GM12878 (cell line): ENCODE measurements at regions of chr14 and their contacts with region 1.

Region 1: GRCh38 chr14:22472935-22473854 is 115.8 kb downstream of the DAD1 start:
- DNase-seq: no peak
- ATAC-seq: peak; percentile 67
- H3K4me3 ChIP-seq: no peak overlapping the region
- H3K27ac ChIP-seq: peak overlapping the region; percentile 49
- H3K4me1 ChIP-seq: peaks cover 50% of the 10 kb centered on the region
- H3K27me3 ChIP-seq: no peaks in the 10 kb centered on the region
- CTCF ChIP-seq: peak; percentile 59 to 72 (median 72)
- EP300 ChIP-seq: no peak
- POLR2A ChIP-seq: no peak
- RAD21 ChIP-seq: peak; percentile 96

Region 2: GRCh38 chr14:22200977-22201605 is 272.1 kb before region 1 on chr14:
- CTCF ChIA-PET with region 1: interaction called, 8 read pairs
- POLR2A ChIA-PET with region 1: no interaction called
- RAD21 ChIA-PET with region 1: interaction called, 10 read pairs
- SMC1A ChIA-PET with region 1: interaction called, 5 read pairs
- in situ Hi-C with region 1: no loop called
- intact Hi-C with region 1: no loop called
- DNase-seq: peak; percentile 3
- ATAC-seq: peak; percentile 93
- H3K4me3 ChIP-seq: no peak overlapping the region
- H3K27ac ChIP-seq: no peak overlapping the region
- H3K4me1 ChIP-seq: no peaks in the 10 kb centered on the region
- H3K27me3 ChIP-seq: no peaks in the 10 kb centered on the region; a peak in 1 of 4 replicates
- CTCF ChIP-seq: peak; percentile 64 to 72 (median 65); a peak in 5 of 6 replicates
- EP300 ChIP-seq: no peak
- POLR2A ChIP-seq: no peak
- RAD21 ChIP-seq: peak; percentile 64

Region 3: DNA sequence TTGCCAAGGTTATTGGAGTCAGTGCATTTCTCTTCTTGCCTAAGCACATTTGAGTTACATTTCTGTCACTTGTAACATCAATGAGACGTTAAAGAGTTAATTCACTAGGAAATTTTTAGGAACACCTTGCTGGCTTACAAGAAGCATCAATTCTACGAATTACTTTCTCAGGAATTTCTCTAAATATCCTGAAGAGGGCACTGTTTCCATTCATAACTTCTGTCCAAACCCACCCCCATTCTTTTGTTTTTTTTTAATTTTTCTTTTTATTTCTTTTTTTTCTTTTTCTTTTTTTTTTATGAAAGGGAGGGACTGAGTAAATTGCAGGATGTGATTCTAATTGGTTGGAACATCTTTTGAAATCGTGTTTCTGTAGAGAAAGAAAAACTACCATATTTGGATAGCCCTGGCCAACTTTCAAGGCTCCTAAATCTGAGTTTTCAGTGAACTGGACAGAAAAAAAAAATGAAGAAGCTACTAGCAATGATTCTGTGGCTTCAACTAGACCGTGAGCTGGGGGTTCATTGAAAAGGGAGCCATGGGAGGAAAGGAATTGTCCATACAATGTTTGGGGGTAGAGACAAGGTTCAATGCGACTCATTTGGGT is 169.5 kb before region 1 on chr14:
- CTCF ChIA-PET with region 1: interaction called, 30 read pairs
- POLR2A ChIA-PET with region 1: no interaction called
- RAD21 ChIA-PET with region 1: interaction called, 4 read pairs
- SMC1A ChIA-PET with region 1: interaction called, 6 read pairs
- in situ Hi-C with region 1: no loop called
- intact Hi-C with region 1: no loop called
- DNase-seq: no peak
- ATAC-seq: no peak
- H3K4me3 ChIP-seq: no peak overlapping the region
- H3K27ac ChIP-seq: no peak overlapping the region
- H3K4me1 ChIP-seq: no peaks in the 10 kb centered on the region
- H3K27me3 ChIP-seq: 0 out of 4 replicates have a peak, but pooled peaks cover 0 to 5% of the 10 kb centered on the region in 2 experiments
- CTCF ChIP-seq: peak; percentile 39 to 48 (median 44); a peak in 4 of 6 replicates
- EP300 ChIP-seq: no peak
- POLR2A ChIP-seq: no peak
- RAD21 ChIP-seq: peak; percentile 61

Region 4: GRCh38 chr14:22375321-22375930 is 97.8 kb before region 1 on chr14:
- CTCF ChIA-PET with region 1: interaction called, 142 read pairs
- POLR2A ChIA-PET with region 1: interaction called, 73 read pairs
- RAD21 ChIA-PET with region 1: interaction called, 272 read pairs
- SMC1A ChIA-PET with region 1: interaction called, 912 read pairs
- in situ Hi-C with region 1: no loop called
- intact Hi-C with region 1: no loop called
- DNase-seq: no peak
- ATAC-seq: peak; percentile 75
- H3K4me3 ChIP-seq: no peak overlapping the region
- H3K27ac ChIP-seq: no peak overlapping the region
- H3K4me1 ChIP-seq: no peaks in the 10 kb centered on the region
- H3K27me3 ChIP-seq: no peaks in the 10 kb centered on the region
- CTCF ChIP-seq: peak; percentile 50 to 60 (median 50)
- EP300 ChIP-seq: no peak
- POLR2A ChIP-seq: no peak
- RAD21 ChIP-seq: peak; percentile 79

Region 5: GRCh38 chr14:22432348-22432976 is 40.7 kb before region 1 on chr14:
- CTCF ChIA-PET with region 1: interaction called, 39 read pairs
- POLR2A ChIA-PET with region 1: no interaction called
- RAD21 ChIA-PET with region 1: interaction called, 19 read pairs
- SMC1A ChIA-PET with region 1: interaction called, 18 read pairs
- in situ Hi-C with region 1: no loop called
- intact Hi-C with region 1: no loop called
- DNase-seq: no peak
- ATAC-seq: peak; percentile 83
- H3K4me3 ChIP-seq: no peak overlapping the region
- H3K27ac ChIP-seq: no peak overlapping the region
- H3K4me1 ChIP-seq: peaks cover 19% of the 10 kb centered on the region
- H3K27me3 ChIP-seq: no peaks in the 10 kb centered on the region
- CTCF ChIP-seq: no peak
- EP300 ChIP-seq: no peak
- POLR2A ChIP-seq: no peak
- RAD21 ChIP-seq: no peak

Region 6: GRCh38 chr14:22483863-22484593 is 10.8 kb after region 1 on chr14:
- CTCF ChIA-PET with region 1: interaction called, 171 read pairs
- POLR2A ChIA-PET with region 1: interaction called, 875 read pairs
- RAD21 ChIA-PET with region 1: interaction called, 107 read pairs
- SMC1A ChIA-PET with region 1: interaction called, 203 read pairs
- in situ Hi-C with region 1: no loop called
- intact Hi-C with region 1: no loop called
- DNase-seq: no peak
- ATAC-seq: peak; percentile 39
- H3K4me3 ChIP-seq: peak overlapping the region; percentile 72
- H3K27ac ChIP-seq: peak overlapping the region; percentile 98
- H3K4me1 ChIP-seq: peaks cover 84% of the 10 kb centered on the region
- H3K27me3 ChIP-seq: no peaks in the 10 kb centered on the region
- CTCF ChIP-seq: no peak
- EP300 ChIP-seq: no peak
- POLR2A ChIP-seq: peak; percentile 52
- RAD21 ChIP-seq: no peak

Region 7: GRCh38 chr14:22531451-22532344 is 58.5 kb after region 1 on chr14:
- CTCF ChIA-PET with region 1: interaction called, 25 read pairs
- POLR2A ChIA-PET with region 1: interaction called, 46 read pairs
- RAD21 ChIA-PET with region 1: interaction called, 95 read pairs
- SMC1A ChIA-PET with region 1: interaction called, 65 read pairs
- in situ Hi-C with region 1: no loop called
- intact Hi-C with region 1: no loop called
- DNase-seq: peak; percentile 93
- ATAC-seq: peak; percentile 70
- H3K4me3 ChIP-seq: peak overlapping the region; percentile 67
- H3K27ac ChIP-seq: peak overlapping the region; percentile 97
- H3K4me1 ChIP-seq: peaks cover 72% of the 10 kb centered on the region
- H3K27me3 ChIP-seq: no peaks in the 10 kb centered on the region
- CTCF ChIP-seq: no peak
- EP300 ChIP-seq: peak in 1 of 2 experiments; percentile 93; a peak in 2 of 4 replicates
- POLR2A ChIP-seq: peak; percentile 67
- RAD21 ChIP-seq: 0 out of 2 replicates have a peak, but pooled peaks have one; percentile 5